GM12878 (cell line): ENCODE measurements at regions of chr11 and their contacts with region 1.

Region 1: GRCh38 chr11:15107730-15108515 is 6.8 kb upstream of the INSC start:
- DNase-seq: no peak
- ATAC-seq: peak; percentile 59
- H3K4me3 ChIP-seq: no peak overlapping the region
- H3K27ac ChIP-seq: no peak overlapping the region
- H3K4me1 ChIP-seq: peaks cover 13% of the 10 kb centered on the region
- H3K27me3 ChIP-seq: no peaks in the 10 kb centered on the region
- CTCF ChIP-seq: no peak
- EP300 ChIP-seq: no peak
- POLR2A ChIP-seq: no peak
- RAD21 ChIP-seq: no peak

Region 2: GRCh38 chr11:15055620-15056356 is 52.1 kb before region 1 on chr11:
- CTCF ChIA-PET with region 1: no interaction called
- POLR2A ChIA-PET with region 1: no interaction called
- RAD21 ChIA-PET with region 1: no interaction called
- SMC1A ChIA-PET with region 1: no interaction called
- in situ Hi-C with region 1: no loop called
- intact Hi-C with region 1: no loop called
- DNase-seq: no peak
- ATAC-seq: no peak
- H3K4me3 ChIP-seq: no peak overlapping the region
- H3K27ac ChIP-seq: no peak overlapping the region
- H3K4me1 ChIP-seq: no peaks in the 10 kb centered on the region
- H3K27me3 ChIP-seq: no peaks in the 10 kb centered on the region
- CTCF ChIP-seq: no peak
- EP300 ChIP-seq: no peak
- POLR2A ChIP-seq: no peak
- RAD21 ChIP-seq: no peak

Region 3: DNA sequence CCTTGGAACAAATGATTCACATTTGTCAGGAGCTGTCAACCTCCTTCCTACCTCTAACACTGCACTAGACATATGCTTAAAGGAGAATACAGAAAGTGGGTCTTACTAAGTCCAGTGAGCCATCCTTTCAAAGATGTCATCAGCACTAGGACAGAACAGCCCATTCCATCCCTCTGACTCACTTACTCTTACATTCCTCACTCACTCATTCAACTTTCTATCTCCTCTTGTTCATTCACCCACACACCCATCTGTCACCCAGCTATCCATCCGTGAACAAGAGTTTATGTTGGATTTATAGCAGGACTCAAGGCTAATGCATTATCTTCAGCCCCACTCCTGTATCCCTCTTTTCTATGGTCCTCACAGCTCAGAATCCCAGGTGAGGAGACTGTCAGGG is 15.9 kb after region 1 on chr11:
- CTCF ChIA-PET with region 1: interaction called, 3 read pairs
- POLR2A ChIA-PET with region 1: no interaction called
- RAD21 ChIA-PET with region 1: interaction called, 3 read pairs
- SMC1A ChIA-PET with region 1: interaction called, 10 read pairs
- in situ Hi-C with region 1: no loop called
- intact Hi-C with region 1: no loop called
- DNase-seq: no peak
- ATAC-seq: no peak
- H3K4me3 ChIP-seq: no peak overlapping the region
- H3K27ac ChIP-seq: no peak overlapping the region
- H3K4me1 ChIP-seq: no peaks in the 10 kb centered on the region; the same call in 1 of the 2 replicates
- H3K27me3 ChIP-seq: peaks cover 0 to 4% of the 10 kb centered on the region in 2 experiments; a peak in 1 of 4 replicates
- CTCF ChIP-seq: no peak
- EP300 ChIP-seq: no peak
- POLR2A ChIP-seq: no peak
- RAD21 ChIP-seq: no peak